B cell (primary cell): ENCODE measurements at regions of chr11 and their contacts with region 1.

Region 1: GRCh38 chr11:68383976-68384501 is 71.6 kb downstream of the LRP5 start:
- DNase-seq: peak; percentile 73
- ATAC-seq: peak; percentile 39
- H3K4me3 ChIP-seq: no peak overlapping the region
- H3K4me3 Mint-ChIP-seq: no peak overlapping the region
- H3K27ac ChIP-seq: no peak overlapping the region
- H3K27ac Mint-ChIP-seq: peak overlapping the region; percentile 59
- H3K4me1 ChIP-seq: peaks cover 32 to 41% of the 10 kb centered on the region in 2 donors
- H3K4me1 Mint-ChIP-seq: peaks cover 42% of the 10 kb centered on the region
- H3K27me3 ChIP-seq: no peaks in the 10 kb centered on the region
- H3K27me3 Mint-ChIP-seq: no peaks in the 10 kb centered on the region
- CTCF ChIP-seq: peak; percentile 96

Region 2: DNA sequence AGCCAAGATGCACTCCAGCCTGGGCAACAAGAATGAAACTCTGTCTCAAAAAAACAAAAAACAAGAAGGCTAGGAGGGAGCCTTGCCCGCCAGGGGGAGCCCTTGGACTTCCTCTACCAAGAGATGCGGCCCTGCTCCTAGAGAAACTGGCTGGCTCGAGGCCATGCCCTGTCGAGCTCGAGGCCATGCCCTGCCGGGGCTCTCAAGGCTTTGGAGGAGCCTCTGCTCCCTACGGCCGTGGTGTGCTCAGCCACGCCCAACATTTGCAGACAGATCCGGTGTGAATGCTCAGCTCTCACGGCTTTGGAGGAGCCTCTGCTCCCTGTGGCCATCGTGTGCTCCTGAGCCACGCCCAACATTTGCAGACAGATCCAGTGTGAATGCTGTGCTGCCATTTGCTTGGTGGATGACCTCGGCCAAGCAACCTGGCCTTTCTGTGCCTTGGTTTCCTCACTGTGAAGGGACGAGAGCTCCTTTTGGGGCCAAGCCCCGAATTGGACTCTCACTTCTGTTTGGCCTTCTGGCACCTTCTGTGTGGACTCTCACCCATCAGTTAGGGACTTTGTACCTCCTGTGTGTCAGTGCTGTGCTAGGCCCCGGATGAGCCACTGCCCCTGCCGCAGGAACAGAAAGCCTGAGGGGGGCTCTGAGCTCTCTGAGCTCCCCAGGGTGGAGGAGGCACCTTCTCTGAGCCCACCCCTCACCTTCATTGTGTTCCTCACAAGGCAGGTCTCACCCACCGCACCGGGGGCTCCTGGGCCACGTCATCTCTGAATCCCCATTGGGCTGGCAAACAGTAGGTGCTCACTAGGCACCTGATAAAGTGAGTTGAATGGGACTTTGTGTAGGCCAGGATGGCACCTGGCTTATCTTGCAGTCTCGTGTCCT is 126.3 kb before region 1 on chr11:
- CTCF ChIA-PET with region 1: interaction called, 33 read pairs
- POLR2A ChIA-PET with region 1: interaction called, 4 read pairs
- intact Hi-C with region 1: loop called (anchors 1 kb)
- DNase-seq: peak; percentile 91
- ATAC-seq: peak; percentile 94
- H3K4me3 ChIP-seq: no peak overlapping the region
- H3K4me3 Mint-ChIP-seq: peak overlapping the region; percentile 52
- H3K27ac ChIP-seq: peak overlapping the region; percentile 4 to 38
- H3K27ac Mint-ChIP-seq: peak overlapping the region; percentile 91
- H3K4me1 ChIP-seq: peaks cover 11 to 21% of the 10 kb centered on the region in 2 donors
- H3K4me1 Mint-ChIP-seq: peaks cover 24% of the 10 kb centered on the region
- H3K27me3 ChIP-seq: no peaks in the 10 kb centered on the region
- H3K27me3 Mint-ChIP-seq: no peaks in the 10 kb centered on the region
- CTCF ChIP-seq: peak; percentile 92

Region 3: DNA sequence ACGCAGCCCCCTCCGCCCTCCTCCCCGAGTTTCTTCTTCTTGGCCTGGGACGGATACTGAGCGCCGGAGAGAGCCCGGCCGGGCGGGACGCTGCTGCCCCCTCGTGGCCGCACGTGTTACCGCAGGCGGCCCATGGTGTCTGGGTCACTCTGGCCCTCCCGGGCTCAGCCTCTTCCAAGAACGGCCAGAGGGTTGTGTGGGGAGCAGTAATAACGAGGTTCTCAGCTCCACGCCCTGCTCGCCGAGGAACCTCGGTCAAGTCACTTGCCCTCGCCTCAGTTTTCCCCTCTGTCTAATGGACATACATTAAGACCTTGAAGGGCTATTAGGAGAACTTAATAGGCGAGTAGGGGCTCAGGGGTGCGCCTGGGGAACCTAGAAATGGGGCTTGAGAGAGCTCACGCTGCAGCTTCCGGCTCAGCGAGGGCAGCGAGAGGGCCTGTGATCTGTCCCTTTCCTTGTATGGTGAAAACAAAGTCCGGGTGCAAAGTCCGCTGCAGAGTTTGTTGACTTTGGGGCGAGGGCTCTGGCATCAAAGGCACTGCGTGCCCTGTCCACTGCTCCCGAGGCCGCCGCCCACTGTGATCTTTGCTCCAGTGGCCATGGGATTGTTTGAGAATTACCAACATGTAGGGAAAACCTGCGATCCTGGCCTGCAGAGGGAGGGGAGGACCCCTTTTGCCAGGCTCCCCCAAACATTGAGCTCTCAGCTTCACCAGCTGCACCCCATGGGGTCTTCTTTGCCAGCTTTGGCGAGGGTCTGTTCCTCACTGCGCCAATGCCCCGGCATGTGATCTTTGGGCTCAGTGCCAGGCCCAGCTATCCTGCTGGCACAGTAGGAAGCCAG is 86.0 kb before region 1 on chr11:
- CTCF ChIA-PET with region 1: interaction called, 77 read pairs
- POLR2A ChIA-PET with region 1: no interaction called
- intact Hi-C with region 1: loop called (anchors 5 kb)
- DNase-seq: peak; percentile 85
- ATAC-seq: peak; percentile 95
- H3K4me3 ChIP-seq: no peak overlapping the region
- H3K4me3 Mint-ChIP-seq: peak overlapping the region; percentile 69
- H3K27ac ChIP-seq: no peak overlapping the region
- H3K27ac Mint-ChIP-seq: peak overlapping the region; percentile 67
- H3K4me1 ChIP-seq: peaks cover 40 to 45% of the 10 kb centered on the region in 2 donors
- H3K4me1 Mint-ChIP-seq: peaks cover 36% of the 10 kb centered on the region
- H3K27me3 ChIP-seq: no peaks in the 10 kb centered on the region
- H3K27me3 Mint-ChIP-seq: no peaks in the 10 kb centered on the region
- CTCF ChIP-seq: peak; percentile 95

Region 4: DNA sequence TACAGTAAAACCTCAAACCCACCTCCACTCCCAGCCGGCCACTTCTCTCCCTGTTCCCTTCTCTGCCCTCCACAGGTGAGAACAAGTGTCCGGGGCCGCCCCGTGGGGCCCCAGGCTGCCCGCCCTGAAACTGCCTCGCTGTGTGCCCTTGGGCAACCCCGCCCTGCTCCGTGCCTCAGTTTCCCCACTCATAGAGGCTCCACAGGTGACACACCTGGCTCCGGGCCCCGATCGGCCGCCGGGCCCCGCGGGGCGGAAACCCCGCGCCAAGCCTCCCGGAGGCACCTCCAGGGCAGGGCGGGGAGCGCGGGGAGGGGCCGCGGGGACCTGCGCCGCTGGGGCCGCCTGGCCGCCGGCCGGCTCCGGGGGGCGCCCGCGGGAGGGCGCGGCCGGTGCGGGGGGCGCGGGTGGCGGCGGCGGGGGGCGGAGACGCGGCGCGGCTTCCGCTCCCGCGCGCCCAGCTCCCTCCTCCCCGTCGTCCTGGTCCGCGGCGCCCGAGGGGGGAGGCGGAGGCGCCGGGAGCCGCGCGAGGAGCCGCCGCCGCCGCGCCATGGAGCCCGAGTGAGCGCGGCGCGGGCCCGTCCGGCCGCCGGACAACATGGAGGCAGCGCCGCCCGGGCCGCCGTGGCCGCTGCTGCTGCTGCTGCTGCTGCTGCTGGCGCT is 71.8 kb before region 1 on chr11 and contains the start of gene LRP5:
- CTCF ChIA-PET with region 1: interaction called, 10 read pairs
- POLR2A ChIA-PET with region 1: no interaction called
- intact Hi-C with region 1: loop called (anchors 5 kb)
- DNase-seq: peak; percentile 25
- ATAC-seq: peak; percentile 66
- H3K4me3 ChIP-seq: peak within 1 kb of the TSS; percentile 21 to 62 (median 42)
- H3K4me3 Mint-ChIP-seq: peak within 1 kb of the TSS; percentile 84
- H3K27ac ChIP-seq: no peak within 1 kb of the TSS
- H3K27ac Mint-ChIP-seq: peak within 1 kb of the TSS; percentile 71
- H3K4me1 ChIP-seq: peaks cover 14 to 17% of the 10 kb centered on the region in 2 donors
- H3K4me1 Mint-ChIP-seq: peaks cover 14% of the 10 kb centered on the region
- H3K27me3 ChIP-seq: peaks cover 0 to 42% (median 17%) of the 10 kb centered on the region in 4 experiments
- H3K27me3 Mint-ChIP-seq: peaks cover 22% of the 10 kb centered on the region
- CTCF ChIP-seq: no peak
- total RNA-seq, gene LRP5: 13.9 and 15.7 TPM in 2 replicates

Region 5: GRCh38 chr11:68370211-68371111 is 13.6 kb before region 1 on chr11:
- CTCF ChIA-PET with region 1: interaction called, 20 read pairs
- POLR2A ChIA-PET with region 1: interaction called, 13 read pairs
- intact Hi-C with region 1: loop called (anchors 1 kb)
- DNase-seq: peak; percentile 87
- ATAC-seq: peak; percentile 83
- H3K4me3 ChIP-seq: peak overlapping the region in 4 of 5 experiments; percentile 28 to 59 (median 36)
- H3K4me3 Mint-ChIP-seq: peak overlapping the region; percentile 84
- H3K27ac ChIP-seq: peak overlapping the region; percentile 52 to 67
- H3K27ac Mint-ChIP-seq: peak overlapping the region; percentile 86
- H3K4me1 ChIP-seq: peaks cover 56 to 64% of the 10 kb centered on the region in 2 donors
- H3K4me1 Mint-ChIP-seq: peaks cover 68% of the 10 kb centered on the region
- H3K27me3 ChIP-seq: peaks cover 0 to 10% (median under 1%) of the 10 kb centered on the region in 4 experiments
- H3K27me3 Mint-ChIP-seq: peaks cover 15% of the 10 kb centered on the region
- CTCF ChIP-seq: no peak

Region 6: GRCh38 chr11:68402355-68403031 is 18.5 kb after region 1 on chr11:
- CTCF ChIA-PET with region 1: no interaction called
- POLR2A ChIA-PET with region 1: no interaction called
- intact Hi-C with region 1: no loop called
- DNase-seq: no peak
- ATAC-seq: no peak
- H3K4me3 ChIP-seq: no peak overlapping the region
- H3K4me3 Mint-ChIP-seq: no peak overlapping the region
- H3K27ac ChIP-seq: no peak overlapping the region
- H3K27ac Mint-ChIP-seq: no peak overlapping the region
- H3K4me1 ChIP-seq: no peaks in the 10 kb centered on the region
- H3K4me1 Mint-ChIP-seq: no peaks in the 10 kb centered on the region
- H3K27me3 ChIP-seq: no peaks in the 10 kb centered on the region
- H3K27me3 Mint-ChIP-seq: no peaks in the 10 kb centered on the region
- CTCF ChIP-seq: no peak

Region 7: GRCh38 chr11:68459886-68460740 is 76.1 kb after region 1 on chr11:
- CTCF ChIA-PET with region 1: no interaction called
- POLR2A ChIA-PET with region 1: no interaction called
- intact Hi-C with region 1: loop called (anchors 5 kb)
- DNase-seq: peak; percentile 97
- ATAC-seq: peak; percentile 90
- H3K4me3 ChIP-seq: peak overlapping the region; percentile 82 to 96 (median 90)
- H3K4me3 Mint-ChIP-seq: peak overlapping the region; percentile 96
- H3K27ac ChIP-seq: peak overlapping the region; percentile 95 to 96
- H3K27ac Mint-ChIP-seq: peak overlapping the region; percentile 97
- H3K4me1 ChIP-seq: peaks cover 29 to 31% of the 10 kb centered on the region in 2 donors
- H3K4me1 Mint-ChIP-seq: peaks cover 40% of the 10 kb centered on the region
- H3K27me3 ChIP-seq: no peaks in the 10 kb centered on the region
- H3K27me3 Mint-ChIP-seq: no peaks in the 10 kb centered on the region
- CTCF ChIP-seq: no peak

Region 8: DNA sequence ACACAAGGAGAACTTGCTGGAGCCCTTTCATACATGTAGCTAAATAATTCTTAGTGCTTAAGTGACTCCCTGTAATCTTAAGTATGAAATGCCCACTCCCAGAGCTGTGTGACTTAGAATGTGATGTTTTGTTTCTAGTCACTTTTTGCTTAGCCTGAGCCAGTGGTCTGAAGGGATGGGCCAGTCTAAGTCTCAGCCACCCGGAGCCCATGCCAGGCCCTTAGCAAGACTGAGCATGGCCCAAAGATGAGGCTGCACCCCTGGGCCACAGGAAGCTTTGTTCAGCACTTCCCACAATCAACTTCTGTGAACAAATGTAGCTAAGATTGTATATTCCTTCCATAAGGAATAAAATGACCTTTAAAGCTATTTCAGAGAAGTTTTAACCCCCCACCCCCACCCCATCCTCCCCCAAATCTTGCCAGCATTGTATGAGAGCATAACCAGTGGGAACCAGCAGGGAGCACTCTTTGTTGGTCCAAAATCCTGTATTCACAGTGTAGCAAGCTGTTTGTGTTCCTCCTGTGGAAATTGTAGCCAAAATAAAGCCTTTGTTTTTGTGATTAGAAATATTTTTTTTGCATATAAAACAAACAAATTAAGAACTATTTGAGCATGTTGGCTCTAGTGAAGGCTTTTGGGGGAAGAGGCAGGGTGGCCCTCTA is 226.5 kb after region 1 on chr11:
- CTCF ChIA-PET with region 1: no interaction called
- POLR2A ChIA-PET with region 1: no interaction called
- intact Hi-C with region 1: no loop called
- DNase-seq: no peak
- ATAC-seq: no peak
- H3K4me3 ChIP-seq: no peak overlapping the region
- H3K4me3 Mint-ChIP-seq: no peak overlapping the region
- H3K27ac ChIP-seq: no peak overlapping the region
- H3K27ac Mint-ChIP-seq: no peak overlapping the region
- H3K4me1 ChIP-seq: no peaks in the 10 kb centered on the region
- H3K4me1 Mint-ChIP-seq: no peaks in the 10 kb centered on the region
- H3K27me3 ChIP-seq: no peaks in the 10 kb centered on the region
- H3K27me3 Mint-ChIP-seq: no peaks in the 10 kb centered on the region
- CTCF ChIP-seq: no peak